ENCODE measurements at regions of chr5 and their contacts with region 1.

Region 1: DNA sequence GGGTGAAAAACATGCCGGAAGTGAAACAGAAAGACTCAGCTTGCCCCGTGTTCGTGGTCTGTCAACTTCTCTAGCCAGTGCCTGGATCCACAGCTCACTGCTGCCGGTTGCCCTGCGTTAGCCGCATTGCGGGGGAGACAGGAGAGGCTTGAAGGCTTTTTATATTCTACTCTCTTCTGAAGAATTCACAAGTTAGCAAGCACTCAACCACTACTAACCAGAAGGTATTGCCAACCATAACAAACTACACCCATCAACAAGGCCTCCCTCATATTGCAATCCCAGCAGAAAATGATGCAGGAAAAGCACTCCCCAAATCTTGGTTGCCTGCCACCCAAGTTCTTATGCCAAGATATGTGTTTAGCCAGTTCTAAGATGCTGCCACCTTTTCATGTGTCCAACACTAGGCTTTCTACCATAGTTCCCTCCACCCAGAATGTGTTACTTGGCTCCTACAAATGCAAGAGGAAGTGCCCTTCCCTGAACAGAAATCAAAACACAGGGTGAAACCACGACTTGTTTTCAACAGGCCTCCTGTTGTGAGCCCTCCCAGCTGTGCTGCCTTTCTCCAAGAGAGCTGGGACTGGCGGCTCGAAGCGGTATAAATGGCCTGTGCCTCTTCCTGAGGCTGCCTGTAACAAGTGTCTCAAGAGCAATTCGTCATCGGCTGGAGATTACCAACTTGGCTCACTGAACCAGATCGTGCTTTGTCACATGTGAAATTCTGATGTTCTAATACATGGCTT is 129.0 kb downstream of the SNX18 start:
- DNase-seq: peak; percentile 80
- H3K4me3 Mint-ChIP-seq: peak overlapping the region; percentile 68
- H3K27ac Mint-ChIP-seq: peak overlapping the region; percentile 88
- H3K4me1 Mint-ChIP-seq: peaks cover 46% of the 10 kb centered on the region
- H3K27me3 Mint-ChIP-seq: no peaks in the 10 kb centered on the region

Region 2: DNA sequence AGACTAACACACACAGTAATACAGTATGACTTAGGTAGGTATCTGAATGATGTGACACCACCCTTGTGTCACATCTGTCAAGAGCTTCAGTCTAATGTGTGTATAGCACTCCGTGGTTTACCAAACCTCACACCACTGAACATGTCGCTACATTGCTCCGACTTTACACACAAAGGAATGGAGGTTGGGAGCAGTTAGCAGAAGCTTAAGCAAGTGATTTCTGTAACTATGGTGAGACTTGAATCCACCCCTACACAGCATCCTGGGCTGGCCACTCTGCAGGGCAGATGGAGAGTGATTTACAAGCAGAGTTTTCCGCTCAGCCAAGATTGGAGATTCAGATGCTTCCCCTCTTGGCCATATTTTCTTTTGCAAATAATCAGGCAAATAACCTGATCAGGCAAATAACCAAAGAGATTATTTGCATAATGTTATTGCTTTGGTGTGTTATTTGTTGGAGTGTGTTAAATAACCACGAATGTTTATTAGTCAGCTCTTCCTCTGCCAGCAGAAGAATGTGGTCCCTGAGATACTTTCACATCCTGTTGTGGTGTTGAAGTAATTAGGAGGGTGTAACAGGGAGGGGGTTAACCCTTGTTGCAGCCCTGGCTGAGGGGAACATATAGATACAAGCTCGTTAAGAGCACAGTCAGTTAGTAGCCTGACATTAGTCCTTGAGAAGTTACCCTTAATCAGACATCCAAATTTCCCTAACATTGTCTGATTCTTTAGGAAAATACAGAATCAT is 36.2 kb before region 1 on chr5:
- intact Hi-C with region 1: loop called (anchors 1 kb)
- DNase-seq: peak; percentile 41
- H3K4me3 Mint-ChIP-seq: peak overlapping the region; percentile 68
- H3K27ac Mint-ChIP-seq: peak overlapping the region; percentile 92
- H3K4me1 Mint-ChIP-seq: peaks cover 27% of the 10 kb centered on the region
- H3K27me3 Mint-ChIP-seq: peaks cover 3% of the 10 kb centered on the region

Region 3: DNA sequence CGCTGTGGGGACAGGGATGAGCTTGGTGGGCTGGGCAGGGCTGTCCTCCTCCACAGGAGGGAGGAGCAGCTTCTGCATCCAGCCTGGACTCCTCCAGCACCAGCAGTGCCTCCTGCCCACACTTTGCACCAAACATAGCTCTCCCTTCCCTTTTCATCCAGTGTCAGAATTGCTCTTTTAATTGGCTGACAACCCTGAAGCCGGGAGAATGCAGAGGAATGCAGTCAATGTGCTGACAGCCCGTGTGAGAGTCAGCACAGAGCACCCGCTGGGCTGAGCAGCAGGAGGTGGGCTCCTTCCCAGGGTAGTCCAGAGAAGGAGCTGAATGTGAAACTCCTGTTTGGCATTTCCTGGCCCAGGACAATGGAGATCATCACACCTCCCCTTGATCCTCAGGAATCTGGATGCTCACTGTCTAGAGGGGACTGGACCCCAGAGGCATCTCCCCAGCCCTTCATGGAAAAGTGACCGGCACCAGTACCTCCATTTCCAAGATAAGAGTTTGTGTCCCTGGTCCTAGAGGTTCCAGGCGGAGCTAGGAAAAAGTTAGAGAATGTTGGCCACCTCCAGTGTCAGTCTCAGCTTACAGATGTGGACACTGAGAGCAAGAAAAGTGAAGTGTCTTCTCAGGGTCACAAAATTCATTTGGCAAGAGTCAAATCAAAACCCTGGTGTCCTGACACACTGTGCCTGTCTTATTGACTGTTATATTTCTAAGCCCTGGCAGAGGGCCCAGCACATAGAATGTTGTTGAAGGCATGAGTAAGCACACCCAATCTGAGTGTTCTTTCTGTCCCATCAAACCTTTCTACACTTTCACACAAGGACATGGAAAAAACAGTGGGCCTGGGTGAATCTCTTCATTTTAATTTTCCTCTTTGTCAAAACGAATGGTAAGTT is 73.1 kb after region 1 on chr5:
- intact Hi-C with region 1: loop called (anchors 1 kb)
- DNase-seq: no peak
- H3K4me3 Mint-ChIP-seq: no peak overlapping the region
- H3K27ac Mint-ChIP-seq: peak overlapping the region; percentile 80
- H3K4me1 Mint-ChIP-seq: peaks cover 46% of the 10 kb centered on the region
- H3K27me3 Mint-ChIP-seq: no peaks in the 10 kb centered on the region

Region 4: GRCh38 chr5:54792611-54793404 is 146.3 kb after region 1 on chr5:
- intact Hi-C with region 1: loop called (anchors 1 kb)
- DNase-seq: no peak
- H3K4me3 Mint-ChIP-seq: peak overlapping the region; percentile 32
- H3K27ac Mint-ChIP-seq: peak overlapping the region; percentile 91
- H3K4me1 Mint-ChIP-seq: peaks cover 47% of the 10 kb centered on the region
- H3K27me3 Mint-ChIP-seq: peaks cover 3% of the 10 kb centered on the region

Region 5: DNA sequence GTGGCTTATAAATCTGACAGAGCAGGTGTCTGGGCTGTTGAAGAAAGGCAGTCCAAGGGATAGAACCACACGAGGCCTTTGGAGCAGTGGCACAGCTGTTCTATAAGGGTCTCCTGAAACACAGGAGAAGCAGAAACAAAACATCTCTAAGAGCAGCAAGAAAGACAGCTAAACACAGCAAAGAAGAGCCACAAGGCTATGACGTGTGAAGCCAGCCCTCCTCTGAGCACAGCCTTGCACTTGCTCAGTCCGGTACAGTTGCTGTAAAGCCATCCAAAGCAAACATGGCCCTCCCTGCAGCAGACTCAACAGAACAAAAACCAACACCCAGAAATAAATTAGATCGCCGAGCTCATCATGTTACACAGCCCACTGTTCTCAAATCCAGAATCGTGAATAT is 374.9 kb after region 1 on chr5:
- intact Hi-C with region 1: loop called (anchors 10 kb)
- DNase-seq: no peak
- H3K4me3 Mint-ChIP-seq: no peak overlapping the region
- H3K27ac Mint-ChIP-seq: no peak overlapping the region
- H3K4me1 Mint-ChIP-seq: peaks cover 52% of the 10 kb centered on the region
- H3K27me3 Mint-ChIP-seq: no peaks in the 10 kb centered on the region

Measured in activated T-helper 1 cell treated with anti-CD3 and anti-CD28 coated beads, Interleukin-12 subunit alpha, Interleukin-12 subunit beta, Interleukin-2, Interleukin-4 antibody, amounts not matched to agents 30 ng/mL and 10 ng/mL and 1 ng/mL, durations not matched to agents 14 hours and 24 hours and 36 hours (primary cell).